Natural killer cell (primary cell): ENCODE measurements at regions of chr7 and their contacts with region 1.

Region 1: DNA sequence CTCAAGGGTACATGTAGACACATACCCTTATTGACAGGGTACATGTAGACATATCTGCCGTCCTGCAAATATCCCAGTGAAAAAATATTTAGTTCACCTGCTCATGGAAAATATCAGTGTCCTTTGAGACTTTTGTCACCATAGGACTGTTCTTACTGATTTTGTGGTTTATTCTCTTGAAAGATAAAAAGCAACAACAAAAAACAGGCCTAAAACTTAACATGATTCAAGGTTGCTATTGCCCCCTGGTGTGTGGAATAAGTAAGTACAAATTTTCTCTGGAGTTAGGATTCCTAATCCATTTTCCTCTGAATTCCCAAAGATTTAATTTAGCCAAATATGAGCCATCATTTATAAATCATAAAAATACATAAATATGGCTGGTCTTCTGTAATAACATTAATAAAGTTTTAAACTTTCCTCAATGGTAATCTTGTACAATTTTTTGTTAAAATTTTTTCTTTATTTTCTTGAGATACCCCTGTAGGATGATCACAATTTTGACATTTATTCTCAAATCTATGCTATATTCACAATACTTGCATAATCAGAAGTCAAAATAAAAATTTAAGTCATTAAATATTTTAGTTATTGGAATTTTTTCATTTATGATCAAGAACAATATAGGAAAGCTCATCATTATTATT is 741.4 kb upstream of the POT1 start:
- DNase-seq: no peak
- ATAC-seq: peak in 1 of 3 donors; percentile 30
- H3K4me3 ChIP-seq: no peak overlapping the region
- H3K4me3 Mint-ChIP-seq: no peak overlapping the region
- H3K27ac ChIP-seq: no peak overlapping the region
- H3K27ac Mint-ChIP-seq: no peak overlapping the region
- H3K4me1 ChIP-seq: no peaks in the 10 kb centered on the region
- H3K4me1 Mint-ChIP-seq: no peaks in the 10 kb centered on the region
- H3K27me3 ChIP-seq: no peaks in the 10 kb centered on the region
- H3K27me3 Mint-ChIP-seq: no peaks in the 10 kb centered on the region
- CTCF ChIP-seq: peak; percentile 67

Region 2: GRCh38 chr7:125059861-125060456 is 611.1 kb before region 1 on chr7:
- intact Hi-C with region 1: loop called (anchors 1 kb)
- DNase-seq: no peak
- ATAC-seq: no peak
- H3K4me3 ChIP-seq: no peak overlapping the region
- H3K4me3 Mint-ChIP-seq: no peak overlapping the region
- H3K27ac ChIP-seq: no peak overlapping the region
- H3K27ac Mint-ChIP-seq: no peak overlapping the region
- H3K4me1 ChIP-seq: no peaks in the 10 kb centered on the region
- H3K4me1 Mint-ChIP-seq: no peaks in the 10 kb centered on the region
- H3K27me3 ChIP-seq: no peaks in the 10 kb centered on the region
- H3K27me3 Mint-ChIP-seq: no peaks in the 10 kb centered on the region
- CTCF ChIP-seq: peak; percentile 19

Region 3: DNA sequence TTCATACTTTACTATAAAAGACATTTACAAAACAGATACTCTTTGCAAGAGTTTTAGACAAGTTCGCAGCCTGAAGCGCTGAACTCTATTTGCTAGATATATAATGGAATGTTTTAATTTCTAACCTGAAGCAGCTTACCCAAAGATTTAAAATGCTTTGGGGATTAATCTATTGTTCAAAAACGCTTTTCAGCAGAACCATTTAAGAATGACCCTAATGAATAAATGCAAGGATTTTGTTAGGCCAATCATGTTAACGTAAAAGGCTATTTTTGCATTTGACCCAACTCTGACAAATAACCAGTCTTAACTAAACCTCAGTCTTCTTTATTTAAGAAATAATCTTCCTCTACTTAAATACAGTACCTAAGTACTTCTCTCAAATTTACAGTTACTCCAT is 334.7 kb before region 1 on chr7:
- intact Hi-C with region 1: no loop called
- DNase-seq: no peak
- ATAC-seq: no peak
- H3K4me3 ChIP-seq: no peak overlapping the region
- H3K4me3 Mint-ChIP-seq: no peak overlapping the region
- H3K27ac ChIP-seq: no peak overlapping the region
- H3K27ac Mint-ChIP-seq: no peak overlapping the region
- H3K4me1 ChIP-seq: no peaks in the 10 kb centered on the region
- H3K4me1 Mint-ChIP-seq: no peaks in the 10 kb centered on the region
- H3K27me3 ChIP-seq: no peaks in the 10 kb centered on the region
- H3K27me3 Mint-ChIP-seq: no peaks in the 10 kb centered on the region
- CTCF ChIP-seq: no peak

Region 4: DNA sequence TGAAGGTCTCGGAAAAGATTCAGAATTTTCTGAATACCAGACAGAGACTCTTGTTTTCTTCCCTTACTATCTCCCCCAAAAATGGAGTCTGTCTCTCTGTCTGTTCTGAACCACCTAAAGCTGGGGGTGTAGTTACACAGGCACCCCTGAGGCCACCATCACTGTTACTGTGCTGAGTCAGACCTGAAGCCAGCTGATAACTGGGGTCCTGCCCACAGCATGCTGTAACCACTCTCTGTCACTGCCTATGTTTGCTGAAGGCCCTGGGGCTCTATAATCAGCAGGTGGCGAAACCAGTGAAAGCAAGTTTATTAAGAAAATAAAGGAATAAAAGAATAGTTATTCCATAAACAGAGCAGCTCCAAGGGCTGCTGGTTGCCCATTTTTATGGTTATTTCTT is 166.2 kb before region 1 on chr7:
- intact Hi-C with region 1: no loop called
- DNase-seq: no peak
- ATAC-seq: no peak
- H3K4me3 ChIP-seq: no peak overlapping the region
- H3K4me3 Mint-ChIP-seq: no peak overlapping the region
- H3K27ac ChIP-seq: no peak overlapping the region
- H3K27ac Mint-ChIP-seq: no peak overlapping the region
- H3K4me1 ChIP-seq: no peaks in the 10 kb centered on the region
- H3K4me1 Mint-ChIP-seq: no peaks in the 10 kb centered on the region
- H3K27me3 ChIP-seq: no peaks in the 10 kb centered on the region
- H3K27me3 Mint-ChIP-seq: no peaks in the 10 kb centered on the region
- CTCF ChIP-seq: no peak